ENCODE measurements at regions of chr11 and their contacts with region 1.

Region 1: GRCh38 chr11:28659716-28660348 is 551.6 kb downstream of the METTL15 start:
- DNase-seq: no peak

Region 2: GRCh38 chr11:29251738-29252137 is 591.9 kb after region 1 on chr11:
- intact Hi-C with region 1: loop called in 1 of 2 experiments (anchors 5 kb)
- DNase-seq: no peak